ENCODE measurements at regions of chr3 and their contacts with region 1.

Region 1: GRCh38 chr3:139935016-139935865 is at the start of gene CLSTN2:
- DNase-seq: peak; percentile 58 to 85 (median 77)
- ATAC-seq: peak; percentile 55 to 92 (median 86)
- H3K4me3 ChIP-seq: peak within 1 kb of the TSS; percentile 39 to 76 (median 56)
- H3K27ac ChIP-seq: peak within 1 kb of the TSS in 3 of 12 donors; percentile 22 to 37 (median 29)
- H3K4me1 ChIP-seq: peaks cover 0 to 31% (median 12%) of the 10 kb centered on the region in 12 donors
- H3K27me3 ChIP-seq: peaks cover 0 to 50% (median 4%) of the 10 kb centered on the region in 9 donors
- CTCF ChIP-seq: peak in 2 of 12 donors; percentile 12 to 18
- POLR2A ChIP-seq: peak in 1 of 2 donors; percentile 61
- total RNA-seq, gene CLSTN2: 2.0 to 7.6 (median 3.9) TPM

Region 2: DNA sequence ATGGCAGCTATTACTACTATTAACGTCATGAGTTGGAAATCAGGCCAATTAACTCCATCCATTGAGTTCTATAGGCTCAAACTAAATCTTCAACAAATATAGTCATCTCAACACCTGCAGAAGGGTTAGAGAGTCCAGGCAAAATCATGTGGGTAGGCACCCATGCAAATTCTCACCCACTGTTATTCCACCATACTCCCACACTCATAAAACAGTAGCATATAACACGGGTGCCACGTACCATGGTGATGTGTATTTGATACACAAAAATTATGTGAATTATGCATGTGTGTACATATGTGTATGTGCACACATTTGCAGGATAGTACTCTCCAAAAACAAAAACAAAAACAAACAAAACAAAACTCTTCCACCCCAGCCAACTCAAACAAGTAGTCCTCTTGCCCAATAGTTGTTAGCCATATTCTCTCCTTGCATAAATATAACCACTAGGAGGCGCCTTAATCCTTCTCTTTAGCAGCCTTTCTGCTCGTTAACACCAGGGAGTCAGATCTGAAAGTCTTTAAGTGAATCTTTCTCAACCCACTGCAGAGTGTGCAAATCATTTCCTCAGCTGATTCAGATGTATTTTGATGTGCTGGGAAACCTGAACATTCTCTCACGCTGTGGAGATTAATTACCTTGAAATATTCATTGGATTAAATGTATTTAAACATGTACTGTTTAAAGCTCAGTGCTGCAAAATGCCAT is 507.8 kb before region 1 on chr3:
- intact Hi-C with region 1: loop called in 8 of 10 experiments (anchors 2 to 10 kb)
- DNase-seq: no peak
- ATAC-seq: peak; percentile 64 to 90 (median 82)
- H3K4me3 ChIP-seq: no peak overlapping the region
- H3K27ac ChIP-seq: no peak overlapping the region
- H3K4me1 ChIP-seq: peaks cover 0 to 5% (median 0%) of the 10 kb centered on the region in 12 donors
- H3K27me3 ChIP-seq: no peaks in the 10 kb centered on the region
- CTCF ChIP-seq: peak; percentile 71 to 88 (median 85)
- POLR2A ChIP-seq: no peak

Region 3: GRCh38 chr3:139588450-139588849 is 346.8 kb before region 1 on chr3:
- intact Hi-C with region 1: loop called in 6 of 10 experiments (anchors 2 to 10 kb)
- DNase-seq: peak in 3 of 5 donors; percentile 32 to 43 (median 37)
- ATAC-seq: peak; percentile 65 to 78 (median 71)
- H3K4me3 ChIP-seq: no peak overlapping the region
- H3K27ac ChIP-seq: no peak overlapping the region
- H3K4me1 ChIP-seq: peaks cover 0 to 7% (median 0%) of the 10 kb centered on the region in 12 donors
- H3K27me3 ChIP-seq: no peaks in the 10 kb centered on the region
- CTCF ChIP-seq: peak in 9 of 12 donors; percentile 2 to 43 (median 24)
- POLR2A ChIP-seq: no peak

Region 4: GRCh38 chr3:139728414-139728813 is 206.8 kb before region 1 on chr3:
- intact Hi-C with region 1: loop called in 1 of 10 experiments (anchors 10 kb)
- DNase-seq: no peak
- ATAC-seq: no peak
- H3K4me3 ChIP-seq: no peak overlapping the region
- H3K27ac ChIP-seq: no peak overlapping the region
- H3K4me1 ChIP-seq: no peaks in the 10 kb centered on the region
- H3K27me3 ChIP-seq: no peaks in the 10 kb centered on the region
- CTCF ChIP-seq: no peak
- POLR2A ChIP-seq: no peak

Region 5: DNA sequence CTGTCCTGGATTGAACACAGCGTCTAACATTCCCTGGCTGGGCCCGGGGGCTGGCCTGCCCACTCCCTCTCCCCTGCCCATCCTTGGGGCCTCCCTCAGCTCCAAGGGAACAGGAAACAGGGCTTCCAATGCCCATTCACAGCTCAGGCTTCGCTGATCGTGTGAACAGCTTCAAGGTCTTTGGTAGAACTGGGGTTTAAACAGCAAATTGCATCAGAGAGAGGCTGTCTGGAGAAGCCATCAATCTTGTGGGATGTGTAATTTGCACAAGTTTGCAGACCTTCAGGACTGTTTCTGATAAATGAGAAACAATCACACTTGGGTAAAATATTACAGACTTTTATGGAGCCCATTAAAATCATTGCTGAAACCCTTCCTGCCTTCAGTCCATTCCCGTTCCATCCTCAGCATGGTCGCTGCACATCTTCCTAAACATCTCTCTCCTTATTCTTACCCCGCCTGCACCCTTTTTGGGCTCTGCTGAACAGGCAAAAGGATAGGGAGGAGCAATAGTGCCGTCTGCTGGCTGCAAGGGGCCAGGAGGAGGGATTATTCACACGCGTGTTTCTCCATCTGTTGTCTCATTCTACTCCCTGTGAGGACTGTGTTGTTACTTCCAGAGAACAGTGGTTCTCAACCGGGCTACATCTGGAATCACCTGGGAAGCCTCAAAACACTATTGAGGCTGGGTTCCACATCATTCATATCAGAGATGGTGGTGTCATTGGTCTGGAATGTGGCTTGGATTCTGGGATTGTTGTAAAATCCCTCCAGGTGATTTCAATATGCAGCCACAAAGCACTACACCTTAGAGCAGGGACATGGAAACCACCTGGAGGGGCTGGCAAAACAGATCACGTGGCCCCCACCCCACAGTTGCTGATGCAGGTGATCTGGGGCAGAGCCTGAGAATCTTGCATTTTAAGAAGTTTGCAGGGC is 116.0 kb after region 1 on chr3:
- intact Hi-C with region 1: loop called in 7 of 10 experiments (anchors 2 to 5 kb)
- DNase-seq: peak in 2 of 5 donors; percentile 19 to 24
- ATAC-seq: peak; percentile 34 to 68 (median 58)
- H3K4me3 ChIP-seq: no peak overlapping the region
- H3K27ac ChIP-seq: no peak overlapping the region
- H3K4me1 ChIP-seq: peaks cover 0 to 7% (median 0%) of the 10 kb centered on the region in 12 donors
- H3K27me3 ChIP-seq: no peaks in the 10 kb centered on the region
- CTCF ChIP-seq: peak; percentile 9 to 61 (median 50)
- POLR2A ChIP-seq: no peak

Region 6: DNA sequence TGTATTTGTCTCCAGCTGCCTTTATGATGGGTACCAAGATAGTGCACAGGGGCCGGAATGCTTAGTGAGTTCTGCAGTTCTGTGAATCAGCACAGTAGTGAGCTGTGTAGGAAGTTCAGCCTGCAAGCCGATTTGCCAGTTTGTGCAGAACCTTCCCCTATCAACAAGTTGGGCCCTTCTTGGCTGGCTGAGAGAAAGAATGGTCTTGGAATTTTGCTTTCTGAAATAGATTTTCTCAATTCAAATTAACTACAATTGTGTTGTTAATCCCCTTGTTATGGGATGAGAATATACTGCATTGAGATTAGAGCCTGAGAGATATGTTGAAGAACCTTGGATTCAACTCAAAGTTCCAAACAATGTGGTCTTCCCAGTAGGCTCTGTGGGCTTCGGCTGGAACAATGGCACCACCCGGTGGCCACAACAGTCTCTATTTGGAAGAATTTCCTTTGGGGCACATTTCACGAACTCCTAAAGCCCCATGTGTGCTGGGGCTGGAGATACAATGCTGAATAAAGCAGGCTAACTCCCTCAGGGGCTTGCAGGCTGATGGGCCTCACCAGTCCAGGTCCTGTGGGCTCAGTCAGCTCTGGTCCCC is 801.7 kb after region 1 on chr3:
- intact Hi-C with region 1: loop called in 1 of 10 experiments (anchors 2 kb)
- DNase-seq: peak; percentile 25 to 73 (median 48)
- ATAC-seq: peak in 3 of 4 donors; percentile 49 to 73 (median 69)
- H3K4me3 ChIP-seq: no peak overlapping the region
- H3K27ac ChIP-seq: no peak overlapping the region
- H3K4me1 ChIP-seq: no peaks in the 10 kb centered on the region
- H3K27me3 ChIP-seq: peaks cover 0 to 10% (median 0%) of the 10 kb centered on the region in 9 donors
- CTCF ChIP-seq: peak; percentile 46 to 66 (median 55)
- POLR2A ChIP-seq: no peak

Measured in heart left ventricle (tissue), 16 donors.